Heart left ventricle (tissue), 16 donors: ENCODE measurements at regions of chr10 and their contacts with region 1.

Region 1: GRCh38 chr10:784403-785088 is 95.1 kb upstream of the DIP2C start:
- DNase-seq: peak in 3 of 5 donors; percentile 49 to 81 (median 77)
- ATAC-seq: peak in 3 of 4 donors; percentile 57 to 89 (median 63)
- H3K4me3 ChIP-seq: peak overlapping the region in 11 of 12 donors; percentile 16 to 55 (median 44)
- H3K27ac ChIP-seq: peak overlapping the region in 2 of 12 donors; percentile 11 to 22
- H3K4me1 ChIP-seq: peaks cover 0 to 27% (median 6%) of the 10 kb centered on the region in 12 donors
- H3K27me3 ChIP-seq: peaks cover 0 to 17% (median 0%) of the 10 kb centered on the region in 9 donors
- CTCF ChIP-seq: peak in 2 of 12 donors; percentile 12 to 23
- POLR2A ChIP-seq: no peak

Region 2: DNA sequence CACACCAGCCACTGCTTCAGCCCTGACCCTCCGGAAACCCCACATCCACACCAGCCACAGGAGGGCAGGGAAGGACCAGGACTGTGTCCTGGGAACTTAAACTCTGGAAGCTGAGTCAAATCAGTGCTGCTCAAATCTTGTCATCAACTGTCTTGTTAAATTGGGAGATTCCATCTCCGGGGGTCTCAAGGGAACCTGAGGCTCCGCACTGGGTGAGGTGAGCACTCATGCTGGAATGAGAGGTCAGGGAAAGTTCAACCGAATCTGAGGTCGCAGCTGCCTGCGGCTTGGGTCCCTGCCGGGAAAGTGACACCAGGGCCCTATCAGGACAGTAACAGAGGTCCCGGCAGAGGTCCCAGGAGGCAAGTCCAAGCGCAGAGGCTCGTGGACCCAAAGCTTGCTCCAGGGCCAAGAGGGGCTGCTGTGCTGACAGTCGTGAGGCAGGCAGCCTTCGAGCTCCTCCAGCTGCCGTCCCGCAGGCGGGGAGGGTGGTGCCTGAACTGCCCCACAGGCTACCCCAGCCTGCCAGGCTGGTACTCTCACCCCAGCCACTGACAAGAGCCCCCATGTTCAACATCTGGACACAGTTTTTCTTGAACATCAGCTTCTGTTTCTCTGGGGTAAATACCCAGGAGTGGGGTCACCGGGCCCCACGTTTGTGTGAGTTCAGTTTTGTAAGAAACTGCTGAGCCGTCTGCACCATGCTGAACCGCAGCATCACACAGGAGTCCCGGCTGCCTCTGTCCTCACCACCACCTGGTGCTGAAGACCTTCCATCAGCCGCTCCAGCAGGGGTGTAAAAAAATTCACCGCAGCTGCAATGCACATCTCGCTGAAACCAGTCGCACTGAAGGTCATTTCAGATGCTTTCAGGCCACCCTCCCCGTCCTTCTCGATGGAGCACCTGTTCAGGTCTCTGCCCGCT is 196.0 kb before region 1 on chr10:
- intact Hi-C with region 1: loop called in 3 of 10 experiments (anchors 5 to 10 kb)
- DNase-seq: peak; percentile 52 to 81 (median 70)
- ATAC-seq: peak; percentile 41 to 80 (median 79)
- H3K4me3 ChIP-seq: no peak overlapping the region
- H3K27ac ChIP-seq: no peak overlapping the region
- H3K4me1 ChIP-seq: peaks cover 0 to 39% (median 13%) of the 10 kb centered on the region in 12 donors
- H3K27me3 ChIP-seq: no peaks in the 10 kb centered on the region
- CTCF ChIP-seq: peak in 8 of 12 donors; percentile 18 to 42 (median 34)
- POLR2A ChIP-seq: no peak

Region 3: GRCh38 chr10:593901-594457 is 190.6 kb before region 1 on chr10:
- intact Hi-C with region 1: loop called in 3 of 10 experiments (anchors 5 to 10 kb)
- DNase-seq: peak in 2 of 5 donors; percentile 53 to 70
- ATAC-seq: peak; percentile 63 to 88 (median 75)
- H3K4me3 ChIP-seq: peak overlapping the region in 3 of 12 donors; percentile 2 to 12 (median 12)
- H3K27ac ChIP-seq: peak overlapping the region in 9 of 12 donors; percentile 4 to 68 (median 35)
- H3K4me1 ChIP-seq: peaks cover 0 to 37% (median 8%) of the 10 kb centered on the region in 12 donors
- H3K27me3 ChIP-seq: no peaks in the 10 kb centered on the region
- CTCF ChIP-seq: no peak
- POLR2A ChIP-seq: no peak

Region 4: GRCh38 chr10:689433-690371 is 94.8 kb before region 1 on chr10 and contains the start of gene DIP2C:
- intact Hi-C with region 1: loop called in 1 of 10 experiments (anchors 5 kb)
- DNase-seq: peak; percentile 77 to 88 (median 81)
- ATAC-seq: peak; percentile 79 to 90 (median 82)
- H3K4me3 ChIP-seq: peak within 1 kb of the TSS; percentile 67 to 98 (median 87)
- H3K27ac ChIP-seq: peak within 1 kb of the TSS; percentile 71 to 93 (median 88)
- H3K4me1 ChIP-seq: peaks cover 0 to 22% (median 13%) of the 10 kb centered on the region in 12 donors
- H3K27me3 ChIP-seq: peaks cover 0 to 12% (median 0%) of the 10 kb centered on the region in 9 donors
- CTCF ChIP-seq: no peak
- POLR2A ChIP-seq: peak in 1 of 2 donors; percentile 47
- total RNA-seq, gene DIP2C: 23.2 to 43.1 (median 30.3) TPM

Region 5: DNA sequence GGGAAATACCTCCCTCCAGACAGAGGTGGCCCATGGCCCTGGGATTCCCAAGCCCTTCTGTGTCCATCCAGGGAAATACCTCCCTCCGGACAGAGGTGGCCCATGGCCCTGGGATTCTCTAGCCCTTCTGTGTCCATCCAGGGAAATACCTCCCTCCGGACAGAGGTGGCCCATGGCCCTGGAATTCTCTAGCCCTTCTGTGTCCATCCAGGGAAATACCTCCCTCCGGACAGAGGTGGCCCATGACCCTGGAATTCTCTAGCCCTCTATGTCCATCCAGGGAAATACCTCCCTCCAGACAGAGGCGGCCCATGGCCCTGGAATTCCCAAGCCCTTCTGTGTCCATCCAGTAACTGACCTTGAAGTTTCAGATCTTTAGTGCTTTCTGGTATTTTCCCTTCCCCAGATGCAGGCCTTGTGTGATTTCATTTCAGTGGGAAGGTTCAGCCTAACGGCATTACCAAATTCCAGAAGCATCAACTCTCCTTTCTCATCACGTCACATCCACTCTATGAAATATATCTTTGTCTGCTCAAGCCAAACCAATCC is 66.3 kb before region 1 on chr10:
- intact Hi-C with region 1: loop called in 1 of 10 experiments (anchors 10 kb)
- DNase-seq: no peak
- ATAC-seq: no peak
- H3K4me3 ChIP-seq: no peak overlapping the region
- H3K27ac ChIP-seq: no peak overlapping the region
- H3K4me1 ChIP-seq: peaks cover 0 to 3% (median 0%) of the 10 kb centered on the region in 12 donors
- H3K27me3 ChIP-seq: no peaks in the 10 kb centered on the region
- CTCF ChIP-seq: no peak
- POLR2A ChIP-seq: no peak